WTC11 (cell line): ENCODE measurements at regions of chr16 and their contacts with region 1.

Region 1: DNA sequence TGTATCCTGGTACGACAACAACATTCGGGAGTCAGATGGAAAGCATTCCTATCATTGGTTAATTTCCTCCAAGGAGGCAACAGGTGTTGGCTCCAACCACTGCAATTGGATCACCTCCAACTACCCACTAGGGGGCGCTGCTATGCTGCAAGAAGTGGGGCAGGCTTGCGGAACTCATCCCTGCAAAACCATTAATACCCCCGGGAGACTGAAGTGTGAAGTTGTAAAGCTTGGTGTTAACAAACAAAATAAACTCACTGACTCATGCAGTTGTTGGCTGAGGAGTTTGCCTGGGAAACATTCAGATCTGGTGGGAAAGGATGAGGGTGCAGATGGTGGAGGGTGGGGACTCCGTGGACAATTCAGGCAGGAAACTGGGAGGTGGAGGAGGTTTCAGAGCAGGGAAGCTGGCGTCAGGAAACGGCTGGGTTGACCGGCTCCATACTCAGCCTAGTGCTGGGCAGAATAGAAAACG is 84.9 kb downstream of the HS3ST2 start:
- DNase-seq: peak; percentile 91
- ATAC-seq: peak; percentile 95
- H3K4me3 Mint-ChIP-seq: no peak overlapping the region
- H3K27ac Mint-ChIP-seq: no peak overlapping the region
- H3K4me1 Mint-ChIP-seq: no peaks in the 10 kb centered on the region
- H3K27me3 Mint-ChIP-seq: no peaks in the 10 kb centered on the region
- CTCF ChIP-seq: peak; percentile 94

Region 2: GRCh38 chr16:22727285-22728166 is 171.4 kb before region 1 on chr16:
- CTCF ChIA-PET with region 1: no interaction called
- POLR2A ChIA-PET with region 1: no interaction called
- DNase-seq: no peak
- ATAC-seq: no peak
- H3K4me3 Mint-ChIP-seq: no peak overlapping the region
- H3K27ac Mint-ChIP-seq: no peak overlapping the region
- H3K4me1 Mint-ChIP-seq: peaks cover 6% of the 10 kb centered on the region; the same call in 1 of the 2 replicates
- H3K27me3 Mint-ChIP-seq: no peaks in the 10 kb centered on the region
- CTCF ChIP-seq: no peak

Region 3: DNA sequence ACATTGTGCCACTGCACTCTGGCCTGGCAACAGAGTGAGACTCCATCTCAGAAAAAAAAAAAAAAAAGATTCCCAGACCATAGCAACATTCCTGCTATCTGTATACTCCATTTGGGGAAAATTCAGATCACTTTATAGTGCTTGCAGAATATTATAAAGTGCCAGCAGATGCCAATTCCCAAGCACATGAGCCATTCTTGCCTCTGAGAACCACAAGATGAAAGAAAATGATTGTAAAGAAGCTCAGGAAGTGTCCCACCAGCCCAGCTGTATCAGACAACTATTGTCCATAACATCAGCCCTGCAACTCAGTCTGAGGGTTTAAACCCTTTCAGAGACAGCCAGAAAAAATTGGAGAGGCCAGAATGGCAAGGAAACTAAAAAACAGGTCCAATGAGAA is 15.9 kb before region 1 on chr16:
- CTCF ChIA-PET with region 1: interaction called, 20 read pairs
- POLR2A ChIA-PET with region 1: no interaction called
- DNase-seq: no peak
- ATAC-seq: no peak
- H3K4me3 Mint-ChIP-seq: no peak overlapping the region
- H3K27ac Mint-ChIP-seq: no peak overlapping the region
- H3K4me1 Mint-ChIP-seq: peaks cover 23% of the 10 kb centered on the region
- H3K27me3 Mint-ChIP-seq: no peaks in the 10 kb centered on the region
- CTCF ChIP-seq: no peak

Region 4: GRCh38 chr16:22924492-22924891 is 25.6 kb after region 1 on chr16:
- CTCF ChIA-PET with region 1: interaction called, 20 read pairs
- POLR2A ChIA-PET with region 1: no interaction called
- DNase-seq: no peak
- ATAC-seq: no peak
- H3K4me3 Mint-ChIP-seq: no peak overlapping the region
- H3K27ac Mint-ChIP-seq: no peak overlapping the region
- H3K4me1 Mint-ChIP-seq: peaks cover 10% of the 10 kb centered on the region
- H3K27me3 Mint-ChIP-seq: no peaks in the 10 kb centered on the region; the same call in 1 of the 2 replicates
- CTCF ChIP-seq: no peak

Region 5: DNA sequence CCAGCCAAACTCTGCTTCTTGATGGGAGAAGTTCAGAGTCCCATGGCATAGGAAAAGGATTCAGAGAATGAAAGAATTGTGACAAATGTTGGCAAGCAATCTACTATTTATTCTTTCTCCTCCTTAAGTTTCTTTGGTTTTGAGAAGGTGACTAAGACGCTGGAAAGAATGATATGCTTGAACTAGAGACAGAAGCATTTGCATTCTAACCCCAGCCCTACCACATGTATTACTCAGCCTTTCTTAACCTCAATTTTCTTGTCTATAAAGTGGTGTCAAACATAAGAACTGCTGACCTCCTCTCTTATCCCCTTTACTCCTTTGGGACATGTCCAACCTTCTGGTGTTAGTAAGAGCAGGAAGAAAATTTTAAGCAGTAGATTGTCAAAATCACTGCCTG is 39.7 kb after region 1 on chr16:
- CTCF ChIA-PET with region 1: interaction called, 18 read pairs
- POLR2A ChIA-PET with region 1: no interaction called
- DNase-seq: no peak
- ATAC-seq: no peak
- H3K4me3 Mint-ChIP-seq: no peak overlapping the region
- H3K27ac Mint-ChIP-seq: 0 out of 2 replicates have a peak overlapping the region, but pooled peaks have one; percentile 61
- H3K4me1 Mint-ChIP-seq: peaks cover 23% of the 10 kb centered on the region
- H3K27me3 Mint-ChIP-seq: no peaks in the 10 kb centered on the region
- CTCF ChIP-seq: no peak

Region 6: DNA sequence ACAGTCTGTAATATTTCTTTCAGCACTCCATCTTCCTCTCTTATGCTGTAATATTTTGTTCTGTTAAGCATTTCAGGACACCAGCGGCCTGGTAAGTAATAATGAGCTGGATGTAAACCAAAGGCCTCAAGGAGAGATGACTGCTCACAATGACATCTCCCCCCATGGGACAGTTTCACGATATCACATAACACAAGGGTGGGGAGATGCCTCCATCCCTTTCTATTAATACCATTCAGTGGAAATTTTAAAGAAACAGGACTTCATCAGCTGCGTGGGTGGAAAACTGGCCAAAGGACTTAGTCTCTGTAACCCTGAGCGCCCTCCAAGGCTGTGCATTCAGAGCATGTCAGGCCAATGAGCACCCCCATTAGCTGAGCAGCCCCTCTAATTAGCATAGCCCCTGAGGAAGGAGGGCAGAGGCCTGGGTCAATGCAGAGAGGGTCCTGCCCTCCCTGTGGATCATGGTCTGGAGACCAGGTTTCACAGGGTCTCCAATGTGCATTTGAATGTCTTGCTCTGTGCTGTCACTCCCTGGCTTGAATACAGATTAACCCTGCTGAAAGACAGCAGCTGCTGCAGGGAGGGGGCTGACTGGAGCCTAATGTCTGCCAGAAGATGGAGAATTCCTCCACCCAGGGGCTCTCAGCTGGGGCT is 71.4 kb after region 1 on chr16:
- CTCF ChIA-PET with region 1: interaction called, 138 read pairs
- POLR2A ChIA-PET with region 1: no interaction called
- DNase-seq: peak; percentile 18
- ATAC-seq: peak; percentile 89
- H3K4me3 Mint-ChIP-seq: no peak overlapping the region
- H3K27ac Mint-ChIP-seq: no peak overlapping the region
- H3K4me1 Mint-ChIP-seq: peaks cover 18% of the 10 kb centered on the region
- H3K27me3 Mint-ChIP-seq: no peaks in the 10 kb centered on the region; the same call in 1 of the 2 replicates
- CTCF ChIP-seq: no peak

Region 7: DNA sequence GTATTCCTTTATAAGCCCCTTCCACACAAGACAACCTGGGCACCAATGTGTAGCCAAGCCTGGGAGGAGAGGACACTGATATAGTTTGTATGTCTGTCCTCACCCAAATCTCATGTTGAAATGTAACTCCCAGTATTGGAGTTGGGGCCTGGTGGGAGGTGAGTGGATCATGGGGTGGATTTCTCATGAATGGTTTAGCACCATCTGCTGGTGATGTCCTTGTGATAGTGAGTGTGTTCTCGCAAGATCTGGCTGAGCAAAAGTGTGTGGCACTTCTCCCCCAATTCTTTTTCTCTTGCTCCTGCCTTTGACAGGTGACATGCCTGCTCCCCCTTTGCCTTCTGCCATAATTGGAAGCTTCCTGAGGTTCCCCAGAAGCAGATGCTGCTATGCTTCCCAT is 114.6 kb after region 1 on chr16:
- CTCF ChIA-PET with region 1: interaction called, 13 read pairs
- POLR2A ChIA-PET with region 1: no interaction called
- DNase-seq: no peak
- ATAC-seq: peak; percentile 64; the same call in 1 of the 2 replicates
- H3K4me3 Mint-ChIP-seq: no peak overlapping the region
- H3K27ac Mint-ChIP-seq: no peak overlapping the region
- H3K4me1 Mint-ChIP-seq: 0 out of 2 replicates have a peak, but pooled peaks cover 3% of the 10 kb centered on the region
- H3K27me3 Mint-ChIP-seq: no peaks in the 10 kb centered on the region
- CTCF ChIP-seq: no peak

Region 8: GRCh38 chr16:24022797-24023196 is 1123.9 kb after region 1 on chr16:
- CTCF ChIA-PET with region 1: no interaction called
- POLR2A ChIA-PET with region 1: no interaction called
- DNase-seq: no peak
- ATAC-seq: no peak
- H3K4me3 Mint-ChIP-seq: no peak overlapping the region
- H3K27ac Mint-ChIP-seq: no peak overlapping the region
- H3K4me1 Mint-ChIP-seq: no peaks in the 10 kb centered on the region
- H3K27me3 Mint-ChIP-seq: peaks cover 2% of the 10 kb centered on the region; the same call in 1 of the 2 replicates
- CTCF ChIP-seq: no peak